H1 (cell line): ENCODE measurements at regions of chr20 and their contacts with region 1.

Region 1: GRCh38 chr20:21235484-21236445 is 67.4 kb upstream of the XRN2 start:
- DNase-seq: peak in 1 of 2 experiments; percentile 88
- H3K4me3 ChIP-seq: peak overlapping the region in 1 of 4 experiments; percentile 43; a peak in 2 of 8 replicates
- H3K27ac ChIP-seq: no peak overlapping the region
- H3K4me1 ChIP-seq: peaks cover 0 to 20% (median 10%) of the 10 kb centered on the region in 4 experiments; a peak in 3 of 7 replicates
- H3K27me3 ChIP-seq: no peaks in the 10 kb centered on the region
- CTCF ChIP-seq: peak; percentile 92 to 97 (median 94)
- EP300 ChIP-seq: no peak
- POLR2A ChIP-seq: no peak
- RAD21 ChIP-seq: peak; percentile 82 to 85

Region 2: GRCh38 chr20:20860078-20860806 is 375.5 kb before region 1 on chr20:
- CTCF ChIA-PET with region 1: interaction called, 57 read pairs
- POLR2A ChIA-PET with region 1: no interaction called
- DNase-seq: peak; percentile 82 to 99
- H3K4me3 ChIP-seq: no peak overlapping the region
- H3K27ac ChIP-seq: no peak overlapping the region
- H3K4me1 ChIP-seq: no peaks in the 10 kb centered on the region; a peak in 1 of 7 replicates
- H3K27me3 ChIP-seq: no peaks in the 10 kb centered on the region
- CTCF ChIP-seq: peak; percentile 72 to 99 (median 95)
- EP300 ChIP-seq: no peak
- POLR2A ChIP-seq: no peak
- RAD21 ChIP-seq: peak; percentile 95 to 96

Region 3: DNA sequence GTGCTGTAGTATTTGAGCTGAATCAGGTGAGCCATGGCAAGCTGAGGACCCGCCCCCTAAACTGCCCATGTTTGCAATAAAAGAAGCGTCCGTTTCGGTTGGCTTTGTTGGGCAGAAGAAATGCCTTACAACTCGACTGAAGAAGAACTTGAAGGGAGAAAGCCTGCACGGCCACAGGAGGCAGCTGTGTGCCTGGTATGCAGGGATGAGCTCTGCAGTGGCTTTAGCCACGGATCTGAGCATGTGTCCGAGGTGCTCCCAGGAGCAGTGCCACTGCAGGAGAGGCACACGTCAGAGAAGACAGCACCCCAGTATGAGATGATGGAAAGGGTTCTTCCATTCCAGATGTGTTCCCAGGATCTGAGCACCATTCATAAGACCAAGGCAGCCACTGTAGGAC is 86.4 kb before region 1 on chr20:
- CTCF ChIA-PET with region 1: interaction called, 12 read pairs
- POLR2A ChIA-PET with region 1: interaction called, 3 read pairs
- DNase-seq: no peak
- H3K4me3 ChIP-seq: no peak overlapping the region
- H3K27ac ChIP-seq: no peak overlapping the region
- H3K4me1 ChIP-seq: no peaks in the 10 kb centered on the region
- H3K27me3 ChIP-seq: no peaks in the 10 kb centered on the region
- CTCF ChIP-seq: peak in 2 of 3 experiments; percentile 21 to 34; a peak in 2 of 4 replicates
- EP300 ChIP-seq: no peak
- POLR2A ChIP-seq: no peak
- RAD21 ChIP-seq: no peak; a peak in 1 of 4 replicates

Region 4: GRCh38 chr20:21225215-21225947 is 10.4 kb before region 1 on chr20:
- CTCF ChIA-PET with region 1: interaction called, 18 read pairs
- POLR2A ChIA-PET with region 1: interaction called, 8 read pairs
- DNase-seq: no peak
- H3K4me3 ChIP-seq: no peak overlapping the region
- H3K27ac ChIP-seq: no peak overlapping the region
- H3K4me1 ChIP-seq: peaks cover 0 to 5% (median 2%) of the 10 kb centered on the region in 4 experiments; a peak in 4 of 7 replicates
- H3K27me3 ChIP-seq: no peaks in the 10 kb centered on the region
- CTCF ChIP-seq: no peak
- EP300 ChIP-seq: no peak
- POLR2A ChIP-seq: no peak
- RAD21 ChIP-seq: no peak

Region 5: GRCh38 chr20:21262812-21263211 is 27.0 kb after region 1 on chr20:
- CTCF ChIA-PET with region 1: interaction called, 10 read pairs
- POLR2A ChIA-PET with region 1: no interaction called
- DNase-seq: no peak
- H3K4me3 ChIP-seq: no peak overlapping the region
- H3K27ac ChIP-seq: no peak overlapping the region
- H3K4me1 ChIP-seq: no peaks in the 10 kb centered on the region; a peak in 1 of 7 replicates
- H3K27me3 ChIP-seq: no peaks in the 10 kb centered on the region
- CTCF ChIP-seq: no peak
- EP300 ChIP-seq: no peak
- POLR2A ChIP-seq: no peak
- RAD21 ChIP-seq: no peak

Region 6: GRCh38 chr20:21323640-21324039 is 87.9 kb after region 1 on chr20:
- CTCF ChIA-PET with region 1: interaction called, 20 read pairs
- POLR2A ChIA-PET with region 1: no interaction called
- DNase-seq: no peak
- H3K4me3 ChIP-seq: no peak overlapping the region
- H3K27ac ChIP-seq: no peak overlapping the region
- H3K4me1 ChIP-seq: peaks cover 1 to 10% (median 9%) of the 10 kb centered on the region in 4 experiments; a peak in 5 of 7 replicates
- H3K27me3 ChIP-seq: no peaks in the 10 kb centered on the region
- CTCF ChIP-seq: no peak
- EP300 ChIP-seq: no peak
- POLR2A ChIP-seq: no peak
- RAD21 ChIP-seq: no peak

Region 7: GRCh38 chr20:21490095-21490494 is 254.3 kb after region 1 on chr20:
- CTCF ChIA-PET with region 1: interaction called, 26 read pairs
- POLR2A ChIA-PET with region 1: no interaction called
- DNase-seq: no peak
- H3K4me3 ChIP-seq: no peak overlapping the region
- H3K27ac ChIP-seq: no peak overlapping the region
- H3K4me1 ChIP-seq: peaks cover 0 to 4% (median 0%) of the 10 kb centered on the region in 4 experiments; a peak in 1 of 7 replicates
- H3K27me3 ChIP-seq: no peaks in the 10 kb centered on the region
- CTCF ChIP-seq: peak in 1 of 3 experiments; percentile 30; a peak in 2 of 4 replicates
- EP300 ChIP-seq: no peak
- POLR2A ChIP-seq: no peak
- RAD21 ChIP-seq: peak; percentile 30 to 31; a peak in 1 of 4 replicates

Region 8: DNA sequence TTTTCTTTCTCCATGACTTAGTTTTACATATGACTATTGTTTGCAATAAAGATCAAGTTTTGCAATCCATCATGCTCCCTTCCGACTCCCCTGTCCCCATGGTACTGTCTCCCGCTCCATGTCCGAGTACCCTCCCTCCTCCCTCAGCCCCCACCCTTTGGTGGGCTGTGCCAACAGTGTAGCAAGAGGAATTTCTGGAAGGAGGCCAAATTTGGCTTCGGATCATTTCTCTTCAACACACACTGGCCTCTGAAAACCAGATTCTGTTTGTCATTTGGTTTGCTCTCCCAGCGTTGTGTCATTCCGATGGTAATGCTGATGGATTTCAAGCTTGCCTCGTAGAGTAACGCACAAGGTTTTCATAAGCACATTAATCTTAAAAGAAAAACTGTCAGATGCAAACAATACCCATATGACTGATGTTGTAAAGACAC is 446.8 kb after region 1 on chr20:
- CTCF ChIA-PET with region 1: no interaction called
- POLR2A ChIA-PET with region 1: no interaction called
- DNase-seq: no peak
- H3K4me3 ChIP-seq: no peak overlapping the region
- H3K27ac ChIP-seq: no peak overlapping the region
- H3K4me1 ChIP-seq: no peaks in the 10 kb centered on the region
- H3K27me3 ChIP-seq: no peaks in the 10 kb centered on the region
- CTCF ChIP-seq: no peak
- EP300 ChIP-seq: no peak
- POLR2A ChIP-seq: no peak
- RAD21 ChIP-seq: no peak